Activated CD4-positive, alpha-beta T cell treated with anti-CD3 and anti-CD28 coated beads, Interleukin-2, amount 10 ng/mL, durations not matched to agents 24 days and 14 days (primary cell): ENCODE measurements at regions of chr12 and their contacts with region 1.

Region 1: GRCh38 chr12:77010691-77011548 is 54.4 kb downstream of the E2F7 start:
- DNase-seq: peak; percentile 90
- H3K4me3 Mint-ChIP-seq: no peak overlapping the region
- H3K27ac Mint-ChIP-seq: no peak overlapping the region
- H3K4me1 Mint-ChIP-seq: peaks cover 2% of the 10 kb centered on the region
- H3K27me3 Mint-ChIP-seq: peaks cover 7% of the 10 kb centered on the region

Region 2: GRCh38 chr12:76878899-76879709 is 131.8 kb before region 1 on chr12 and contains the start of gene CSRP2:
- intact Hi-C with region 1: loop called (anchors 2 kb)
- DNase-seq: peak; percentile 89
- H3K4me3 Mint-ChIP-seq: peak within 1 kb of the TSS; percentile 93
- H3K27ac Mint-ChIP-seq: peak within 1 kb of the TSS; percentile 52
- H3K4me1 Mint-ChIP-seq: peaks cover 8% of the 10 kb centered on the region
- H3K27me3 Mint-ChIP-seq: peaks cover 61% of the 10 kb centered on the region
- total RNA-seq, gene CSRP2: 0.44 and 0.80 TPM in 2 replicates